Activated naive CD4-positive, alpha-beta T cell treated with anti-CD3 and anti-CD28 coated beads, Interleukin-2, amount 10 ng/mL, durations not matched to agents 7 days and 5 days (primary cell): ENCODE measurements at regions of chr15 and their contacts with region 1.

Region 1: DNA sequence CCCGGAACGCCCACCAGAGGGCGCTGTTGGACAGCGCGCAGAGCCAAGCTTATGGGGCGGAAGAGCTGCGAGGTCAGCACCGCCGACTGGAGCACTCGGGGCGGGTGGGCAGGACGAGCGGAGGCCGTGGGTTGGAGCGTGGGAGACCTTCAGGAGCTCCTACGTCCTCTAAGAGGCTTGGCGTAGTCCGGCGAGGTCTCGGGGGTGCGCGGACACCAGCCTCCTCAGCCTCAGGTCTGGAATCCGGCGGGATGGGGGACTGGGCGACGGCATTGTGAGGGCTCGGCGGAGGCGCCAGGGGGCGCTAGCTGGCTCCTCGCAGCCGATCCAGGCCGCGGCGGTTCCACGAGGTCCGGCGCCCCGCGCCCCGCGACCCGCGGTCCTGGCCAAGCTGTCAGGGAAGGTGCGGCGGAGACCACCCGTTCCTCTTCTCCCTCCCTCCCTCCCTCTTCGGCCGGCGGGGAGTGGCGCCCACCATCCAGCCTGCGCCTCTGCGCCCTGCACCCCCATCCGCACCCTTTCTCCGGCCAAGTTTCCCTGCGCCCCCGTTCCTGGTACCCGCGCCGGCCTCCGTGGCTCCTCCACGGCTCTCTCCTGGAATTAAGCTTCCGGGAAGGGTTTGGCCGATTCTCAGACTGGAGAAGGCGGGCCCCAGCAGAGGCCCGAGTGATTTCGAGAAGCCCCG is 24.3 kb upstream of the POLG start:
- DNase-seq: peak; percentile 85
- H3K4me3 Mint-ChIP-seq: peak overlapping the region; percentile 76
- H3K27ac Mint-ChIP-seq: no peak overlapping the region
- H3K4me1 Mint-ChIP-seq: peaks cover 5% of the 10 kb centered on the region
- H3K27me3 Mint-ChIP-seq: peaks cover 100% of the 10 kb centered on the region

Region 2: GRCh38 chr15:89248584-89248983 is 110.3 kb before region 1 on chr15:
- CTCF ChIA-PET with region 1: no interaction called
- DNase-seq: no peak
- H3K4me3 Mint-ChIP-seq: no peak overlapping the region
- H3K27ac Mint-ChIP-seq: no peak overlapping the region
- H3K4me1 Mint-ChIP-seq: peaks cover 51% of the 10 kb centered on the region
- H3K27me3 Mint-ChIP-seq: peaks cover 3% of the 10 kb centered on the region

Region 3: GRCh38 chr15:89346516-89347231 is 12.2 kb before region 1 on chr15:
- CTCF ChIA-PET with region 1: interaction called, 22 read pairs
- DNase-seq: no peak
- H3K4me3 Mint-ChIP-seq: no peak overlapping the region
- H3K27ac Mint-ChIP-seq: no peak overlapping the region
- H3K4me1 Mint-ChIP-seq: no peaks in the 10 kb centered on the region
- H3K27me3 Mint-ChIP-seq: peaks cover 61% of the 10 kb centered on the region

Region 4: GRCh38 chr15:89378296-89379151 is 19.6 kb after region 1 on chr15:
- CTCF ChIA-PET with region 1: interaction called, 47 read pairs
- DNase-seq: no peak
- H3K4me3 Mint-ChIP-seq: peak overlapping the region; percentile 57
- H3K27ac Mint-ChIP-seq: no peak overlapping the region
- H3K4me1 Mint-ChIP-seq: peaks cover 4% of the 10 kb centered on the region
- H3K27me3 Mint-ChIP-seq: peaks cover 94% of the 10 kb centered on the region

Region 5: DNA sequence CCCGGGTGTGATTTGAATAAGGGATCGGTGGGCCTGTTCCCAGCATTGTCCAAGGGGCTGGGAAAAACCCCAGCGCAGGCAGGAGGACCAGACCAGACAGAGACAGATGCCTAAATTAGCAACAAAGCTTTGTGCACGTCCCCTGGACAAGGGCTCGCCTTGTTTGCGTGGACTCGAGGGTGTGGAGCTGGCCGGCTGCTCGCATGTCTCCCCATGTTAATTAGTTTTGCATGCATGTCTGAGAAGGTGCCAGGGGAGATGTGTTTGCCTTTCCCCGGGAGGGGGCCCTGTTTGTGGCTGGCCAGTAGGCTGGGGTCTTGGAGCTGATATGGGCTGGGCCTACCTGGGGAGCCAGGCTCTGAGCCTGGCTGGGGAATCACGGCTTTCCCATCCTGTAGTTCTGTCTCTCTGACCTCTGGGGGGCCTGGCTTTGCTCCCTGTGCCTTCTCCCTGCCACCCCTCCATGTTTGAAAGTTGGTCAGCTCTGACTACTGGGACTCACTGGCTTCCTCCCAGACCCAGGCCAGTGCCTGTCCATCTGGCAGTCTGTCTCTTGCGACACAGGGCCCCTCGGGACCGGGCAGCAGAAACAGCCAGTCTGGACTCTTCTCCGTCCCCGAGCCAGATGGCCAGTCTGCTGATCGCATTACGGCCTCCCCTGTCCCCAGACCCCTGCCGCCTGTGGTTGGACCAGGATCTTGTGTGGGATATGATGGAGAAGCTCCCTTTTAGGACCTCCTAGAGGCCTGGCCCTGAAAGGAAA is 31.1 kb after region 1 on chr15:
- CTCF ChIA-PET with region 1: interaction called, 12 read pairs
- DNase-seq: no peak
- H3K4me3 Mint-ChIP-seq: no peak overlapping the region
- H3K27ac Mint-ChIP-seq: no peak overlapping the region
- H3K4me1 Mint-ChIP-seq: no peaks in the 10 kb centered on the region
- H3K27me3 Mint-ChIP-seq: peaks cover 70% of the 10 kb centered on the region

Region 6: DNA sequence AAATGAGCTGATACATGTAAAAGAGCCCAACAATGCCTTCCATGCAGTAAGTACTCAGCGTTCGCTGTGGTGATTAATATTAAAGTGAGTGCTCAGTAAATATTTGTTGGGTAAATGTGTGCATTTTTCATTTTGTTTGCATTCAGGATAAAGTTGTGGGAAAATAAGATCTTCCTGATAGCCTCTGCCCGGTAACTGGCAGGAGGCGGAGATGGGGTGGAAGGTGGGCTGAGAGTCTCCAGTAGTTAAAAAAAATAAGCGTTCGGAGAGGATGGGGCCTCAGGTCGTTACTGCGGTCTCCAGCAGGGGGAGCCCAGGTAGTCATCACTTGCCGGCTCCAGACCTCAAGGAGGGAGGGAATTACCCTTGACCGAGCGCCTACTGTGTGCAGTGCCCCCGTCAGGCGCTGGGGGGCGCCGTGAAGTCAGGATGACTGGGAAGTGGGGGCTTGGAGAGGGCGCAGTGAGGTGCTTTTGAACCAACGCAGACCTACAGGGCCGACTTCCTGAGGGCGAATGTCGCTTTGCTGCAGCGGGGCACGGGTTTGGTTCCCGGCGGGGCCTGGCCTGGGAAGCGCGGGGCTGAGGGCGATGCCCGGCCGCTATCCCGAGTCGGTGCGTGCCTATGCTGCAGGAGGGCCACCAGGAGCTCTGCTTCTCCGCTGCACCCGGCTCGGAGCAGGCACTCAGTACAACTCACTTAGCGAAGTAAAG is 57.4 kb after region 1 on chr15:
- CTCF ChIA-PET with region 1: interaction called, 58 read pairs
- DNase-seq: peak; percentile 82
- H3K4me3 Mint-ChIP-seq: no peak overlapping the region
- H3K27ac Mint-ChIP-seq: no peak overlapping the region
- H3K4me1 Mint-ChIP-seq: peaks cover 7% of the 10 kb centered on the region
- H3K27me3 Mint-ChIP-seq: peaks cover 96% of the 10 kb centered on the region

Region 7: DNA sequence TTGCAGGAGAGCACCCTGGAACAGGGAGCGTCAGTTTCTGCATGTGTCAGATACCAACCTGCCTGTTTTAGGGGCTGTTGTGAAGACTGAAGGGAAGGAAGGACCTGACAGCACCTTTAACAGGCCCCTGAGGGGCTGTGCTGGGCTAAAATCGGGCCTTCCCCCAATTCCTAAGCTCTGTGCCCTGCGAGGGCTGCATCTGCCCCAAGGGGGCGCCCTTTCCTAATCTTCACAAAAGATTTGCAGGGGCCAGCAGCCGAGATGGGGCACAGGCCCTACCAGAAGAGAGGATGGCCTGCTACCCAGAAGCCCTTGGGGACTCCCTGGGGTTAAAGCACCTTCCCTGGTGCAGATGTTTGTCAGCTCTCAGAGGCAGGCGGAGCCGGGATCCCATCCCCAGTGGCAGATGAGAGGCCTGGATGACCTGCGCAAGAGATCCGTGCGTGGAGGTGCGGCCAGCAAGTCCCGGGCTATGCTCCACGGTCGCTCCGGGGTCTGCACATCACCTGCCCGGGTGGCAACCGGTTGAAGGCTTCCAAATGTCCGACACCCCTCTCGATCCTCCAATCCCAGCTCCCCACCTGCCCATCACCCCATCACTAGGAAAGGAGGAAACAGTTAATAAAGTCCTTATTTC is 83.9 kb after region 1 on chr15:
- CTCF ChIA-PET with region 1: interaction called, 17 read pairs
- DNase-seq: peak; percentile 69
- H3K4me3 Mint-ChIP-seq: no peak overlapping the region
- H3K27ac Mint-ChIP-seq: no peak overlapping the region
- H3K4me1 Mint-ChIP-seq: no peaks in the 10 kb centered on the region
- H3K27me3 Mint-ChIP-seq: peaks cover 53% of the 10 kb centered on the region

Region 8: DNA sequence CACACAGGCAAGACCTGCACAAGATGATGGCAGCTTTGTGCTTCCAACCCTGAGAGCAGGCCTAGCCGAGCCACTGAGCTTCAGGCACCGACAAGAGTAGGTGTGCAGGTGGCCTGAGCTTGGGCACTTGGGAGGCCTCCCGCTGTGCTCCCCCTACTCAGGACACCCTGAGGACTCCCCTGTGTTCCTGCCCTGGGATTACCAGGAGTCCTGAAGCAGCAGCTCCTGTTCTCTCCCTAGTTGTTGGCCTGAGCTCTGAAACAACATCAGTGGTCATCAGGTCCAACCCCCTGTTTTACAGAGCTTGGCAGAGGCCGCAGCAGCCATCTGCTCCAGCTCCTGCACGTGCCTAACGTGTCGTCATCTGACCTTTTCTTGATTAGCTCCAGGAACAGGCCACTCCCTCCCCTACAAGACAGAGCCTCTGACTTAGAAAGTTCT is 409.2 kb after region 1 on chr15:
- CTCF ChIA-PET with region 1: no interaction called
- DNase-seq: no peak
- H3K4me3 Mint-ChIP-seq: no peak overlapping the region
- H3K27ac Mint-ChIP-seq: no peak overlapping the region
- H3K4me1 Mint-ChIP-seq: no peaks in the 10 kb centered on the region
- H3K27me3 Mint-ChIP-seq: peaks cover 13% of the 10 kb centered on the region